ENCODE measurements at regions of chr14 and their contacts with region 1.

Region 1: GRCh38 chr14:77301103-77301502 is 19.6 kb downstream of the POMT2 start:
- DNase-seq: peak; percentile 84 to 95 (median 90)
- H3K4me3 ChIP-seq: no peak overlapping the region
- H3K27ac ChIP-seq: no peak overlapping the region
- H3K4me1 ChIP-seq: peaks cover 5 to 29% of the 10 kb centered on the region in 2 donors
- H3K27me3 ChIP-seq: no peaks in the 10 kb centered on the region
- CTCF ChIP-seq: peak; percentile 63 to 91 (median 86)
- POLR2A ChIP-seq: no peak

Region 2: DNA sequence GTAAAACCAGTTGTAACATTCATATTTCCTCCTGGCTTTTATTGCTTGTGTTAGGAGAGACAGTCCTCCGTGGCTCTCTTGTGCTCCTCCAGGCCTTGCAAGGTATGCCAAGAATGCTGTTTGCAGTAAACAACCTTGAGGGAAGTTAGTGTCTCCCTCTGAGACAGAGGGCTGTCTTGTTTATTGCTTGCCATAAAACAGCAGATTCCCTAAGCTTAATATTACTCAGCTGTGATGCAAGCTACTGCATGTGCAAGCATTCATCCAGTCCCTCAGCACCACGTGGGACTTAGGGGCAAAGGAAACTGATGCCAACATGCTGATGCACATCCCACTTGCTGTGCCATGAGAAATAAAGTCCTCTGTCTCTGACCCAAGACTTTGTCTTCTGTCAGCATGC is 12.9 kb after region 1 on chr14:
- intact Hi-C with region 1: loop called in 1 of 2 experiments (anchors 2 kb)
- DNase-seq: peak in 5 of 7 donors; percentile 46 to 71 (median 65)
- H3K4me3 ChIP-seq: no peak overlapping the region
- H3K27ac ChIP-seq: peak overlapping the region in 4 of 5 donors; percentile 9 to 74 (median 57)
- H3K4me1 ChIP-seq: peaks cover 14 to 47% of the 10 kb centered on the region in 2 donors
- H3K27me3 ChIP-seq: no peaks in the 10 kb centered on the region
- CTCF ChIP-seq: no peak
- POLR2A ChIP-seq: peak in 1 of 2 donors; percentile 42

Region 3: DNA sequence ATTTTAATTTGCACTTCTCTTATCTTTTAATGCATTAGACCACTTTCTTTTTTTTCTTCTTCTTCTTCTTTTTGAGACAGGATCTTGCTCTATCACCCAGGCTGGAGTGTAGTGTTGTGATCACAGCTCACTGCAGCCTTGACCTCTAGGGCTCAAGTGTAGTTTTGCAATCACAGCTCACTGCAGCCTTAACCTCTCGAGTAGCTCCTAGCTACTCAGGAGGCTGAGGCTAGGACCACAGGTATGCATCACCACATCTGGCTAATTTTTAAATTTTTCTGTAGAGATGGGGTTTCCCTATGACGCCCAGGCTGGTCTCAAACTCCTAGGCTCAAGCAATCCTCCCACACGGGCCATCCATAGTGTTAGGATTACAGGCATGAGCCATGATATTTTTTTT is 63.0 kb after region 1 on chr14:
- intact Hi-C with region 1: no loop called
- DNase-seq: peak in 2 of 7 donors; percentile 10 to 16
- H3K4me3 ChIP-seq: no peak overlapping the region
- H3K27ac ChIP-seq: no peak overlapping the region
- H3K4me1 ChIP-seq: peaks cover 0 to 3% of the 10 kb centered on the region in 2 donors
- H3K27me3 ChIP-seq: no peaks in the 10 kb centered on the region
- CTCF ChIP-seq: no peak
- POLR2A ChIP-seq: no peak

Region 4: DNA sequence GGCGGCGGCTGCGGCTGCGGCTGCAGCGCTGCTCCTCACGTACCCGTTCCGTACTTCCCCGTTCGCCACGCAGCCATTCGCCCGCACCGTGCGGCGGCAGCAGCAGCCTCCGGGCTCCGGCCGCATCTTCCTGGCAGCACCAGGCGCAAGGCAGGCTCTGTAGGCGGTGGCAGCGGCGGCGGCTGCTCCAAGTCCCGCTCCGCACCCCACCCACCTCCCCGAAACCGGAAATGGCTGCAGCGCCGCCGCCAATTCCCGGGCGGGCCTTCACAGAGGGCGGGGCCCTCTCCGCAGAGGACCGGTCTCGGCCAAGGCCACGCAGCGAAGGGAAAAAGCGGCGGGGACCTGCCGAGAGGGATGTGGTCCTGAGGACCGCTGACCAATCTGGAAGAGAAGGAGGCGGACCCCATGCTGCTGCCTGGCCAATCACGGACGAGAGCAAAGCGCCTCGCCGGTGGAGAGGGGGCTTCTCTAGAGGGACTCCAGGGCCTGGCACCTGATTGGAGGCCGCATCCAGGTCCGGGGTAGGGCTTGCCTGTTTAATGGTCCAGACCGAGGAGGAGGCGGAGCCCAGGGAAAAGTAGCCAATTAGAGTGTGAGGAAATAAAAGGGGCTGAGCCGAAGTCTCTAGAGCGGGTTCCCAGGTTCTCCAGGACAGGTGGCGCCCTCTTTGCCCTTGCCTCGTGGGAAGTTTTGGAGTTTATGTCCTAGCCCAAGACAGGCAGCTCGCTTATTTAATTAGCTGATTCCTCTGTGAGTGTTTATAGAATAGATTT is 315.5 kb after region 1 on chr14 and contains the start of gene SPTLC2:
- intact Hi-C with region 1: no loop called
- DNase-seq: peak; percentile 98 to 100 (median 100)
- H3K4me3 ChIP-seq: peak within 1 kb of the TSS; percentile 28 to 94 (median 80)
- H3K27ac ChIP-seq: peak within 1 kb of the TSS; percentile 36 to 90 (median 63)
- H3K4me1 ChIP-seq: peaks cover 0 to 26% of the 10 kb centered on the region in 2 donors
- H3K27me3 ChIP-seq: no peaks in the 10 kb centered on the region
- CTCF ChIP-seq: peak in 1 of 6 experiments; percentile 7
- POLR2A ChIP-seq: peak; percentile 49 to 81
- total RNA-seq, gene SPTLC2: 22.8 to 61.9 (median 43.5) TPM

Measured in adrenal gland (tissue), 19 donors.